ENCODE measurements at regions of chr14 and their contacts with region 1.

Region 1: DNA sequence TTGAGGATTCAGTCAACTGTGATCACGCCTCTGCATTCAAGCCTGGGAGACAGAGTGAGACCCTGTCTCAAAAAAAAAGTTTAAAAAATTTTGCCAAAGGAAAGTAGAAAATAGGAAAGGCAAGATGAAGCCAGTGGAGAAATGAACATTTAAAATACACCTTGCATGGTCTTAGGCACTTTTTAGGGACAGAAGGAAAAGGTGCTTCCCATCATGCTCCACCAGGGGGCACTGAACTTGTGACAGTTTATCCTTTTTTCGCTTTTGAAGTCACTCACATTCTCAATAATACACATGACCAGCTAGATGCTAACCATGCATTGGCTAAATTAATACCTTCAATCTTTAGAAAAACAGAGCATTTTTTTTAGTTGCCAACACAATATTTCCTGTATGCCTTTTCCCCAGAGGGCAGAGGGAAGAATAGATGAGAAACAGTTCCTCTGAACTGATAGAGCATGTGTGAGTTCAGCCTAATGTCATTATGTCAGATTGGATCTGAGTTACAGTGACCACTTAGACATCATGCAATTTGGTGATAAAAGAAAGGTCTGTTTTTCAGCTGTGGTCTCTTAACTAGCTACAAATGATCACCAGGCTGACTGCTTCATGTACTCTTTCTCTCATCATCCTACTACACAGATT is 221.8 kb upstream of the SSTR1 start:
- DNase-seq: peak; percentile 74
- H3K4me3 Mint-ChIP-seq: no peak overlapping the region
- H3K27ac Mint-ChIP-seq: no peak overlapping the region
- H3K4me1 Mint-ChIP-seq: peaks cover 7% of the 10 kb centered on the region
- H3K27me3 Mint-ChIP-seq: no peaks in the 10 kb centered on the region

Region 2: DNA sequence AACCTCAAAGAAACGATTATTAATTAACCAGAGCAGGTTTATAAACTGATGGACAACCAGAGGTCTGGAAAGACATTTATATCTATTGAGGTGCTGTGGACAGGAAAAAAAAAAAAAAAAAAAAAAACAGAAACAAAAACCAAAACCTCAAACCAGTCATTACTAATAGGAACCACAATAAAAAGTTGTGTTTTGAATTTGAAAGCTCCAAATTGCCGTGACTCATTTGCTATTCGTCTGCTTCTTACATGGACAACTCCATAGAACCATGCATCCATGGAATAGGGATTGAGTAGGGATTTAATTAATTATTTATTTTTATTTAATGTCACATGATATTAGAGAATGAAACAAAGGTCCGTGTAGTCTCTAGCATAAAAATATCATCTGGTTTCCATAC is 87.7 kb after region 1 on chr14:
- CTCF ChIA-PET with region 1: interaction called, 3 read pairs
- intact Hi-C with region 1: loop called (anchors 2 kb)
- DNase-seq: no peak
- H3K4me3 Mint-ChIP-seq: no peak overlapping the region
- H3K27ac Mint-ChIP-seq: no peak overlapping the region
- H3K4me1 Mint-ChIP-seq: peaks cover 66% of the 10 kb centered on the region
- H3K27me3 Mint-ChIP-seq: no peaks in the 10 kb centered on the region

Region 3: GRCh38 chr14:38150072-38150471 is 164.1 kb after region 1 on chr14:
- CTCF ChIA-PET with region 1: no interaction called
- intact Hi-C with region 1: loop called (anchors 5 kb)
- DNase-seq: no peak
- H3K4me3 Mint-ChIP-seq: no peak overlapping the region
- H3K27ac Mint-ChIP-seq: no peak overlapping the region
- H3K4me1 Mint-ChIP-seq: no peaks in the 10 kb centered on the region
- H3K27me3 Mint-ChIP-seq: no peaks in the 10 kb centered on the region

Region 4: DNA sequence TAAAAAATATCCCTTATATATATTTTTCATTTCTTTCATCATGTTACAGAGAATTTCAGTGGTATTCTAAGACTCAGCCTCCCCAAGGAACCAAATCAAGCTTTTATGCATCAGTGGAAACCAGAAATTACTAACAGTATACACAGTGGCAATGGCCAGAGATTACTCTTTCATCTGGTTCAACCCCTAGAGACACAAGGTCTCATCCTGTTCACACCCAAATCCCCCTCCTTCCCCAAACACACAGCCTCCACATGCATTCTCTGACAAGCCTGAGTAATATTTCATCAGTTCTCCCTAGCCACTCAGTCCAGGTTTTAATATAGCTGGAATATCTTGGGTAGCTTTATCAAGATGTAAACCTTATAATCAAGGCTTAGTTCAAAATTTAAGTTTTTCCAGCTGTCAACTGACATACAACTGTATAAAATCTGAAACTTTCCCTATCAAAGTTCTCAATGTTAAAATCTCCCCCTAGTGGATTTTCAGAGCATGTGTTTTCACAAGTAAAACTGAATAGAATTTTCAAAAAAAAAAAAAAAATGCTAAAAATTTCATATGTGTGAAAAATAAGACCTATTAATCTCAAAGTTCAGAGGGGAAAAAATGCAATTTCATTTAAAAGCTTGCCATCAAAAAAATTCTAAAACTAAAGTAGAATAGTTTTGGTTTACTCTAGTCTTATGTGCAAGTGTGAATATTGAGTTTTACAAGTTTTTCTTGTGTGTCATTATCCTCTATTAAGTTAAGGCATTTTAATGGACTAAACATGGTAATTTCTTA is 211.2 kb after region 1 on chr14:
- CTCF ChIA-PET with region 1: interaction called, 10 read pairs
- intact Hi-C with region 1: loop called (anchors 1 kb)
- DNase-seq: no peak
- H3K4me3 Mint-ChIP-seq: no peak overlapping the region
- H3K27ac Mint-ChIP-seq: no peak overlapping the region
- H3K4me1 Mint-ChIP-seq: peaks cover 5% of the 10 kb centered on the region
- H3K27me3 Mint-ChIP-seq: no peaks in the 10 kb centered on the region

Region 5: GRCh38 chr14:38255673-38256532 is 270.0 kb after region 1 on chr14 and contains the start of gene CLEC14A:
- CTCF ChIA-PET with region 1: no interaction called
- intact Hi-C with region 1: loop called (anchors 5 kb)
- DNase-seq: peak; percentile 6
- H3K4me3 Mint-ChIP-seq: peak within 1 kb of the TSS; percentile 50
- H3K27ac Mint-ChIP-seq: no peak within 1 kb of the TSS
- H3K4me1 Mint-ChIP-seq: peaks cover 10% of the 10 kb centered on the region
- H3K27me3 Mint-ChIP-seq: peaks cover 48% of the 10 kb centered on the region
- total RNA-seq, gene CLEC14A: not detected

Region 6: DNA sequence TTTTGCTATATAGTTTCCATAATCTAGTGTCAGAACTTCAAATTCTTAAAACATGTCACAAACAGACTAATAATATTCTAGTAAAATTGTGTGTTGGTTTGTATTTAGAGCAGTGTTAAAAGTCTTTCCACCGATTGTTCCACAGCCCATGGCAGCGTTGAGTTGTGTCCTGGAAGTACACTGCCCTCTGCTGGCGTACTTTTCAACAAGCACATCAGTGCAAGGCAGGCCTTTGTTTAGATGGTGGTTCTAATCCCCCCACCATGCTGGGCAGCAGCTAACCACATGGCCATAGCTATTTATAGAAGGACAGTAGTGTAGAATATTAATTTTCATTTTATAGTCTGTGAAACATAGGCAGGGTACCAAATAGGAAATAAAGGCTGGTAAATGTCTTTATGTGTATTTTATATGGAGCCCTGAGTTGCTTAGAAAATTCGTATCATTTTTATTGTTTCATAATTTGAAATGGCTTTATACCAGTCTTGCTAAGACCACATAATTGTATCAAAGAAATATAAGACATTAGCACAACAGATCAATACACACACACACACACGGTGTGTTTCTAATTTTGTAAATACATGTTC is 881.7 kb after region 1 on chr14:
- CTCF ChIA-PET with region 1: interaction called, 4 read pairs
- intact Hi-C with region 1: loop called (anchors 5 kb)
- DNase-seq: peak; percentile 80
- H3K4me3 Mint-ChIP-seq: no peak overlapping the region
- H3K27ac Mint-ChIP-seq: no peak overlapping the region
- H3K4me1 Mint-ChIP-seq: no peaks in the 10 kb centered on the region
- H3K27me3 Mint-ChIP-seq: peaks cover 5% of the 10 kb centered on the region

Region 7: DNA sequence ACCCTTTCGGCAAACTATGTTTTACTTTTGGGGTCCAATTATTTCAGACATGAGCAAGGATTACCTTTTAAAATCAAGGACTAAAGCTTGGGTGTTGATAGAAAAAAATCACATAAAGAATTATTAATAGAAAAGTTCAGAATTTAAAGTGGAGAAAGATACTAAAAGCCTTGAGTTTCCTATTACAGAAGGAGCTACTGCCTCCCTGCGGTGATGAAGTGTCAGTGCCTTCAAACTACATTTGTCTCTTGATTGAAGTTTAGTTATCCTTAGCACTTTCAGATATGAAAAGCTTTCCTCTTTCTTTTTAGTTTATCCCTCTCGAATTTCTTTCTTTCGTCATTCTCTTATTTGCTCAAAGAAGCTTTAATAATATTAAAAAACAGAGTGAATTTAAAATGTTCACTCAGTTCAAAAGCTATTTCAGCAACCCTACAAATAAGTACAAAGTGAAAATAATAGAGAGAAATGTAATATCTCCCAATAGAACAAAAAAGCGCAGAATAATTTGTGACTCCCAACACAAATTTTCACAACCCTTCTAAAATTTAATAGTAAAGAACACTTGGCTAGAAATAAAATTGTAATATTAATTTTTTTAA is 1029.5 kb after region 1 on chr14:
- CTCF ChIA-PET with region 1: no interaction called
- intact Hi-C with region 1: loop called (anchors 1 kb)
- DNase-seq: peak; percentile 51
- H3K4me3 Mint-ChIP-seq: no peak overlapping the region
- H3K27ac Mint-ChIP-seq: no peak overlapping the region
- H3K4me1 Mint-ChIP-seq: no peaks in the 10 kb centered on the region
- H3K27me3 Mint-ChIP-seq: no peaks in the 10 kb centered on the region